AG04450 (cell line): ENCODE measurements at regions of chr18 and their contacts with region 1.

Region 1: GRCh38 chr18:62186774-62187542 is at the starts of genes PIGN and RELCH:
- DNase-seq: peak; percentile 96
- H3K4me3 ChIP-seq: peak within 1 kb of the TSS; percentile 97
- H3K27ac ChIP-seq: peak within 1 kb of the TSS; percentile 49
- H3K27me3 ChIP-seq: no peaks in the 10 kb centered on the region
- CTCF ChIP-seq: no peak
- polyA plus RNA-seq, gene PIGN: 25.1 and 33.7 TPM in 2 replicates
- polyA plus RNA-seq, gene RELCH: 14.5 and 20.3 TPM in 2 replicates

Region 2: GRCh38 chr18:61926532-61926931 is 260.4 kb before region 1 on chr18:
- CTCF ChIA-PET with region 1: no interaction called
- POLR2A ChIA-PET with region 1: no interaction called
- DNase-seq: no peak
- H3K4me3 ChIP-seq: no peak overlapping the region
- H3K27ac ChIP-seq: no peak overlapping the region
- H3K27me3 ChIP-seq: no peaks in the 10 kb centered on the region
- CTCF ChIP-seq: no peak

Region 3: DNA sequence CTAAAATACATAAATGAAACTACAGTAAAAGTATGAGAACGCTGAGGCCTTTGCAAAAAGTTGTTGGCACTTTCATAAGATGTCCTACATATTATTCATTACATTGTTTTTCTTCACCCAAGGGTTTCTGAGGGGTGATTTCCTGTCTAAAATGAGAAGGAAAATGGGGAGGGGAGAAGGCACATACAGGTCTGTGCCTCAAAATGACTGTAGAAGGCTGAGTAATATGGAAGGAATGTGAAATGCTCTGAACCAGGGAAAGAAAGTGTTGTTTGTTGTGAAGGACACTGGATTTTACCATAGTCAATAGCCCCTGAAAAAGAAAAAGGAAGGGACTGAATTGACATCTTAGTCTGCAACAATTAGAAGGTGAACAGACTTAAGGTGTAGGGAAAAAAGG is 194.7 kb before region 1 on chr18:
- CTCF ChIA-PET with region 1: no interaction called
- POLR2A ChIA-PET with region 1: no interaction called
- DNase-seq: no peak
- H3K4me3 ChIP-seq: no peak overlapping the region
- H3K27ac ChIP-seq: peak overlapping the region; percentile 84
- H3K27me3 ChIP-seq: no peaks in the 10 kb centered on the region
- CTCF ChIP-seq: no peak

Region 4: GRCh38 chr18:62175521-62175920 is 11.4 kb before region 1 on chr18:
- CTCF ChIA-PET with region 1: interaction called, 17 read pairs
- POLR2A ChIA-PET with region 1: no interaction called
- DNase-seq: no peak
- H3K4me3 ChIP-seq: no peak overlapping the region
- H3K27ac ChIP-seq: no peak overlapping the region
- H3K27me3 ChIP-seq: no peaks in the 10 kb centered on the region
- CTCF ChIP-seq: no peak

Region 5: GRCh38 chr18:62714671-62715435 is 527.9 kb after region 1 on chr18:
- CTCF ChIA-PET with region 1: no interaction called
- POLR2A ChIA-PET with region 1: no interaction called
- DNase-seq: peak; percentile 100
- H3K4me3 ChIP-seq: peak overlapping the region; percentile 71
- H3K27ac ChIP-seq: peak overlapping the region; percentile 68
- H3K27me3 ChIP-seq: no peaks in the 10 kb centered on the region
- CTCF ChIP-seq: peak; percentile 81